CD8-positive, alpha-beta memory T cell (primary cell): ENCODE measurements at regions of chr1 and their contacts with region 1.

Region 1: GRCh38 chr1:152034646-152035405 is 2.0 kb downstream of the S100A11 start:
- DNase-seq: peak; percentile 32 to 74 (median 72)
- H3K4me3 ChIP-seq: peak overlapping the region; percentile 51
- H3K4me3 Mint-ChIP-seq: peak overlapping the region; percentile 93 to 99 (median 96)
- H3K27ac ChIP-seq: peak overlapping the region; percentile 79
- H3K27ac Mint-ChIP-seq: peak overlapping the region; percentile 94 to 100 (median 98)
- H3K4me1 ChIP-seq: peaks cover 40% of the 10 kb centered on the region
- H3K4me1 Mint-ChIP-seq: peaks cover 42 to 60% (median 44%) of the 10 kb centered on the region in 3 donors
- H3K27me3 ChIP-seq: no peaks in the 10 kb centered on the region
- H3K27me3 Mint-ChIP-seq: no peaks in the 10 kb centered on the region

Region 2: GRCh38 chr1:151961833-151962232 is 73.0 kb before region 1 on chr1:
- CTCF ChIA-PET with region 1: no interaction called
- POLR2A ChIA-PET with region 1: no interaction called
- DNase-seq: no peak
- H3K4me3 ChIP-seq: no peak overlapping the region
- H3K4me3 Mint-ChIP-seq: no peak overlapping the region
- H3K27ac ChIP-seq: no peak overlapping the region
- H3K27ac Mint-ChIP-seq: peak overlapping the region in 1 of 8 donors; percentile 61
- H3K4me1 ChIP-seq: no peaks in the 10 kb centered on the region
- H3K4me1 Mint-ChIP-seq: peaks cover 2 to 8% (median 6%) of the 10 kb centered on the region in 3 donors
- H3K27me3 ChIP-seq: no peaks in the 10 kb centered on the region
- H3K27me3 Mint-ChIP-seq: peaks cover 1 to 4% of the 10 kb centered on the region in 2 donors

Region 3: GRCh38 chr1:151984313-151984956 is 50.4 kb before region 1 on chr1:
- CTCF ChIA-PET with region 1: no interaction called
- POLR2A ChIA-PET with region 1: no interaction called
- DNase-seq: peak in 4 of 5 donors; percentile 7 to 63 (median 28)
- H3K4me3 ChIP-seq: no peak overlapping the region
- H3K4me3 Mint-ChIP-seq: peak overlapping the region in 6 of 7 donors; percentile 3 to 66 (median 47)
- H3K27ac ChIP-seq: peak overlapping the region; percentile 6
- H3K27ac Mint-ChIP-seq: peak overlapping the region; percentile 40 to 91 (median 74)
- H3K4me1 ChIP-seq: peaks cover 40% of the 10 kb centered on the region
- H3K4me1 Mint-ChIP-seq: peaks cover 48 to 69% (median 60%) of the 10 kb centered on the region in 3 donors
- H3K27me3 ChIP-seq: no peaks in the 10 kb centered on the region
- H3K27me3 Mint-ChIP-seq: no peaks in the 10 kb centered on the region

Region 4: DNA sequence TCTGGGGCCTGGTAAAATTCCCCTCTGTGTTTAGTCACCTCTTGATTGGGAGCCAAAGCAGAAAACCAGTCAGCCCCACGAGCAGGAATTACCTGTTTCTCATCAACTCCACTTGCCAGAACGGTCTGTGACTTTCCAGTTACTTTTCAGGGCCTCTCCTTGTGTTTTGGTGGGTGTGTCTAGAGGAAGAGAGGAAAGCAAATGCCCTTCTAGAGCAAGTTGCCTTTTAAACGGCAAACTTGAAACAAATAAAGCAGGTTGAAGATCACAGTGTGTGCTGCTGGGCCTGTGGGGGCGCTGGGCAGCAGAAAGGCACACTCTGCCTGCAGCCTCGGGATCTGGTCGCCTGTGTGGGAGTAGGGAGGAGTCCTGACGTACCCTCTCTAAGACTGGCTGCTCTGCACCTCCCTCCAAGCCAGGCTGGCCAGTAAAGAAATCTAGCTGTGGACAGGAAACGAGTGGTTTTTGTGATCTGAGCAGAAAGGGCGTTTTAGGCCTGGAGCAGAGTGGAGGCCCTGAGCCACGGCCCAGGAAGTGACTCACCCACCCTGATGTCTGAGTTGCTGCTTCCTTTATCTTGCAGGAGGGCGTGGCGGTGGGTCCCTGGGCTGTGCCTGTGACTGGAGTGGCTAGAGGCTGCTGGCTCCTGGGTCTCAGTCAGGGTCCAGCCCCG is 13.0 kb after region 1 on chr1:
- CTCF ChIA-PET with region 1: interaction called, 50 read pairs
- POLR2A ChIA-PET with region 1: interaction called, 33 read pairs
- DNase-seq: peak; percentile 76 to 91 (median 81)
- H3K4me3 ChIP-seq: peak overlapping the region; percentile 45
- H3K4me3 Mint-ChIP-seq: peak overlapping the region; percentile 42 to 88 (median 79)
- H3K27ac ChIP-seq: peak overlapping the region; percentile 87
- H3K27ac Mint-ChIP-seq: peak overlapping the region; percentile 95 to 99 (median 99)
- H3K4me1 ChIP-seq: peaks cover 23% of the 10 kb centered on the region
- H3K4me1 Mint-ChIP-seq: peaks cover 18 to 31% (median 30%) of the 10 kb centered on the region in 3 donors
- H3K27me3 ChIP-seq: no peaks in the 10 kb centered on the region
- H3K27me3 Mint-ChIP-seq: peaks cover under 1 to 4% of the 10 kb centered on the region in 2 donors

Region 5: DNA sequence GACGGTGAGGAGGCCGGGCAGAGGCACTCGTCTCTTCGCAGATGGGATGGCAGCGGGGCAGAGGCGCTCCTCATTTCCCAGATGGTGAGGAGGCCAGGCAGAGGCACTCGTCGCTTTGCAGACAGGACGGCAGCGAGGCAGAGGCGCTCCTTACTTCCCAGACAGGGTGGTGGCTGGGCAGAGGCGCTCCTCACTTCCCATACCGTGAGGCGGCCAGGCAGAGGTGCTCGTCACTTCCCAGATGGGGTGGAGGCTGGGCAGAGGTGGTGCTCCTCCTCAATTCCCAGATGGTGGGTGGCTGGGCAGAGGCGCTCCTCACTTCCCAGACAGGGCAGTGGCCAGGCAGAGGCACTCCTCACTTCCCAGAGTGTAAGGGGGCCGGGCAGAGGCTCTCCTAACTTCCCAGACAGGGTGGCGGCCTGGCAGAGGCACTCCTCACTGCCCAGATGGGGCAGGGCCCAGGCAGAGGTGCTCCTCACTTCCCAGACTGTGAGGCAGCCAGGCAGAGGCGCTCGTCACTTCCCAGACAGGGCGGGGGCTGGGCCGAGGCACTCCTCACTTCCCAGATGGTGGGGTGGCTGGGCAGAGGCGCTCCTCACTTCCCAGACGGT is 44.1 kb after region 1 on chr1:
- CTCF ChIA-PET with region 1: no interaction called
- POLR2A ChIA-PET with region 1: no interaction called
- DNase-seq: no peak
- H3K4me3 ChIP-seq: no peak overlapping the region
- H3K4me3 Mint-ChIP-seq: no peak overlapping the region
- H3K27ac ChIP-seq: no peak overlapping the region
- H3K27ac Mint-ChIP-seq: no peak overlapping the region
- H3K4me1 ChIP-seq: no peaks in the 10 kb centered on the region
- H3K4me1 Mint-ChIP-seq: no peaks in the 10 kb centered on the region
- H3K27me3 ChIP-seq: no peaks in the 10 kb centered on the region
- H3K27me3 Mint-ChIP-seq: peaks cover 7 to 26% of the 10 kb centered on the region in 2 donors